Heart left ventricle (tissue), 16 donors: ENCODE measurements at regions of chr2 and their contacts with region 1.

Region 1: GRCh38 chr2:23566236-23567142 is 181.5 kb downstream of the KLHL29 start:
- DNase-seq: peak in 1 of 5 donors; percentile 22
- ATAC-seq: peak in 1 of 4 donors; percentile 2
- H3K4me3 ChIP-seq: no peak overlapping the region
- H3K27ac ChIP-seq: peak overlapping the region in 3 of 12 donors; percentile 33 to 77 (median 52)
- H3K4me1 ChIP-seq: peaks cover 0 to 41% (median 6%) of the 10 kb centered on the region in 12 donors
- H3K27me3 ChIP-seq: no peaks in the 10 kb centered on the region
- CTCF ChIP-seq: peak in 7 of 12 donors; percentile 20 to 39 (median 30)
- POLR2A ChIP-seq: no peak

Region 2: DNA sequence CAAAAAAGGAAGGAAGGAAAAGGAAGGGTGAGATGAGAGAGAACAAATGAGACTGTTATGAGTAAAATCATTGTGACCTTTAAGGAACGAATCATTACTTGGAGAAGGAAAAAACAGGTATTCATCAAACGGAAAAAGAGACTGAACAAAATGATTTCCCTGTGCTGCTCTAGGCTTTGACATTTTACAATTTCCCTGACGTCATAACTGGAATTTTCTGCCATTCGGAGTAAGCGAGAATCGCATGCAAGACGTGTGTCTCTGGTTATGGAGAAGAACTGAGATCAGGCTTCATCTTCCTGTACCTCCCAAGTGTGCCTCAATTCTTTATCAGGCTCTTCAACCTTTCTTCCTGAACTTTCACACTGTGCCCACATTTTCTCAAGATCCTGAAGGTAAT is 716.2 kb before region 1 on chr2:
- intact Hi-C with region 1: no loop called
- DNase-seq: no peak
- ATAC-seq: no peak
- H3K4me3 ChIP-seq: no peak overlapping the region
- H3K27ac ChIP-seq: no peak overlapping the region
- H3K4me1 ChIP-seq: no peaks in the 10 kb centered on the region
- H3K27me3 ChIP-seq: peaks cover 0 to 3% (median 0%) of the 10 kb centered on the region in 9 donors
- CTCF ChIP-seq: no peak
- POLR2A ChIP-seq: no peak

Region 3: GRCh38 chr2:23505218-23505983 is 61.1 kb before region 1 on chr2:
- intact Hi-C with region 1: loop called in 1 of 10 experiments (anchors 10 kb)
- DNase-seq: peak in 1 of 5 donors; percentile 20
- ATAC-seq: no peak
- H3K4me3 ChIP-seq: no peak overlapping the region
- H3K27ac ChIP-seq: peak overlapping the region in 1 of 12 donors; percentile 3
- H3K4me1 ChIP-seq: peaks cover 0 to 68% (median 22%) of the 10 kb centered on the region in 12 donors
- H3K27me3 ChIP-seq: no peaks in the 10 kb centered on the region
- CTCF ChIP-seq: no peak
- POLR2A ChIP-seq: no peak